Mammary epithelial cell (primary cell): ENCODE measurements at regions of chr12 and their contacts with region 1.

Region 1: GRCh38 chr12:25386831-25387731 is 136.4 kb upstream of the KRAS start:
- DNase-seq: peak; percentile 72
- H3K4me3 ChIP-seq: peak overlapping the region; percentile 53 to 98 (median 74)
- H3K27ac ChIP-seq: peak overlapping the region; percentile 95
- H3K4me1 ChIP-seq: peaks cover 10% of the 10 kb centered on the region
- H3K27me3 ChIP-seq: no peaks in the 10 kb centered on the region
- CTCF ChIP-seq: peak; percentile 74 to 82

Region 2: DNA sequence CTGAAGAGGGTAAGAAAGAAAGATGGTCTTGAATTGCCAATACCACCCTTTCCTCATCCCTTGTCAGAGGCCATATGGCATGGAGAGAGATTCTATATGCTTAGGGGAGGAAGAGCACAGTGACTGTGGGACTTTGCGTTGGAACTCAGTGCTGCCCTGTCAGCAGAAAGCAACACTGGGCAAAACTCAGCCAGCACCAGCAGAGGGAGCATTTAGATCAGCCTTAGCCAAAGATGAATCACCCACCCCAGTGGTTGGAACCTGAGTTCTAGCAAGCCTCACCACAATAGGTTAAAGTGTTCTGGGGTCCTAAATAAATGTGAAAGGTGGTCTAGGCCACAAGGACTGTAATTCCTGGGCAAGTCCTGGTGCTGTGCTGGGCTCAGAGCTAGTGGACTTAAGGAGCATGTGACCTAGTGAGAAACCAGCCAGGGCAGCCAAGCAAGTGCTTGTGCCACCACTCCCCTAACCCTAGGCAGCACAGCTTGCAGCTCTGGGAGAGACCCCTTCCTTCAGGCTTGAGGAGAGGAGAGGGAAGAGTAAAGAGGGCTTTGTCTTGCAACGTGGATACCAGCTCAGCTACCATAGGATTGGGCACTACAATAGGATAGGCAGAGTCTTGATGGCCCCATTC is 426.7 kb before region 1 on chr12:
- CTCF ChIA-PET with region 1: no interaction called
- dilution Hi-C with region 1: no loop called
- in situ Hi-C with region 1: no loop called
- intact Hi-C with region 1: loop called (anchors 1 kb)
- DNase-seq: peak; percentile 52
- H3K4me3 ChIP-seq: no peak overlapping the region
- H3K27ac ChIP-seq: no peak overlapping the region
- H3K4me1 ChIP-seq: no peaks in the 10 kb centered on the region
- H3K27me3 ChIP-seq: no peaks in the 10 kb centered on the region
- CTCF ChIP-seq: peak; percentile 81 to 84

Region 3: DNA sequence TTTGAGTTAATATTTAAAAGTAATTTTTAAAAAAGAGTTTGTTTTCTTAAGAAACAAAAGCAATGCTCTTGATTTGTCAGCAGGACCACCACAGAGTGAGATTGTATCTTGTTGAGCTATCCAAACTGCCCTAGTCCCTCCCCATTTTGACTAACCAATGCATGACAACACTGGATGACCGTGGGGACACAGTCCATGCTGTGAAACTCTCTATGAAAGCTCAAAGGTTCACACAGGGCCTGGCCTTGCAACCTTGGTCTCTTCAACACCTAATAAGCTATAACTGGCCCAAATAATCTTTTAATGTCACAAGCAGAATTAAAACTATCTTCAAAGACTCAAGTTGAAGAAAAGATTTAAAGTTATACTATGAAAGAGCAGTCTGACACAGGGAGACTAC is 178.5 kb before region 1 on chr12:
- CTCF ChIA-PET with region 1: interaction called, 6 read pairs
- dilution Hi-C with region 1: no loop called
- in situ Hi-C with region 1: no loop called
- intact Hi-C with region 1: loop called (anchors 1 kb)
- DNase-seq: no peak
- H3K4me3 ChIP-seq: no peak overlapping the region
- H3K27ac ChIP-seq: no peak overlapping the region
- H3K4me1 ChIP-seq: no peaks in the 10 kb centered on the region
- H3K27me3 ChIP-seq: no peaks in the 10 kb centered on the region
- CTCF ChIP-seq: no peak

Region 4: DNA sequence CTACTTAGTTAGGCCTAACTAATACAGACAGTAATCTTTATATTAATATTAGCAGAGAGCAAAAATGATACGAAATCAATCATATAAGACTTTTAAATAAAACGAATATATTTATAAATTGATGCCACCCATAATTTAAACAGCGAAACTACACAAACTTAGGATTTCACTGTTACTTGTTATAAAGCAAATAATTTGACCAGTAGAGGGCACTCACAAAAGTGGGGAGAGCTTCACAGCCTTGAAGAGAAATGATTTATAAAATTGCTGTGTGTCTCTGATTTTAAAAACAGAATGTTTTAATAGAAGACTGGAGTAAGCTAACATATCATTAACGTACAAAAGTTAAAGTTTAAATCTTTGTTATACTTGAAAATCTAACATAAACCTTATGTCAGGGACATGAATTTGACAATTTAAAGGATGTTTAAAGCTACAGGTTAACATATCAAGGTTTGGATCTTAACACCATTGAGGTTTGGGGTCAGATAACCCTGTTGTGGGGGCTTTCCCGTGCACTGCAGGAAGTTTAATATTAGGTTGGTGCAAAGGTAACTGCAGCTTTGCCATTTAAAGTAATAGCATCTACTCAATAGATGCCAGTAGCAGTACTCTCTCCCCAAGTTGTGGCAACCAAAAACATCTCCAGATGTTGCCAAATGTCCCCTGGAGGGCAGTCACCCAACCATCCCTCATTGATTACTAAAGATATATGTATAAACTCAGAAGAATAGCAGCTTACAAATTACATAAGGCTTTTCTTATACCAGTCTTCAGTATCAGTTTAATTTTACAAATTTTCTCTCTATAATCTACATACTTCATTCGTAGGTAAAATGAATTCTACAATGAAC is 145.7 kb before region 1 on chr12:
- CTCF ChIA-PET with region 1: interaction called, 7 read pairs
- dilution Hi-C with region 1: no loop called
- in situ Hi-C with region 1: no loop called
- intact Hi-C with region 1: loop called (anchors 1 kb)
- DNase-seq: no peak
- H3K4me3 ChIP-seq: no peak overlapping the region
- H3K27ac ChIP-seq: no peak overlapping the region
- H3K4me1 ChIP-seq: no peaks in the 10 kb centered on the region
- H3K27me3 ChIP-seq: no peaks in the 10 kb centered on the region
- CTCF ChIP-seq: peak; percentile 66 to 67

Region 5: GRCh38 chr12:26471560-26471959 is 1084.5 kb after region 1 on chr12:
- CTCF ChIA-PET with region 1: no interaction called
- dilution Hi-C with region 1: no loop called
- in situ Hi-C with region 1: no loop called
- intact Hi-C with region 1: no loop called
- DNase-seq: peak; percentile 13
- H3K4me3 ChIP-seq: no peak overlapping the region
- H3K27ac ChIP-seq: no peak overlapping the region
- H3K4me1 ChIP-seq: no peaks in the 10 kb centered on the region
- H3K27me3 ChIP-seq: no peaks in the 10 kb centered on the region
- CTCF ChIP-seq: no peak